ENCODE measurements at regions of chr12 and their contacts with region 1.

Region 1: GRCh38 chr12:95336390-95337067 is 118.9 kb downstream of the VEZT start:
- DNase-seq: peak in 3 of 4 experiments; percentile 10 to 57 (median 40)
- ATAC-seq: peak; percentile 87
- H3K4me3 ChIP-seq: no peak overlapping the region
- H3K27ac ChIP-seq: no peak overlapping the region
- H3K4me1 ChIP-seq: no peaks in the 10 kb centered on the region
- H3K27me3 ChIP-seq: peaks cover 5 to 10% of the 10 kb centered on the region in 2 experiments; a peak in 3 of 5 replicates
- CTCF ChIP-seq: peak; percentile 65 to 76 (median 73)
- EP300 ChIP-seq: no peak
- POLR2A ChIP-seq: no peak
- RAD21 ChIP-seq: peak; percentile 54 to 84

Region 2: GRCh38 chr12:94938583-94938982 is 397.9 kb before region 1 on chr12:
- CTCF ChIA-PET with region 1: no interaction called
- POLR2A ChIA-PET with region 1: no interaction called
- in situ Hi-C with region 1: no loop called
- intact Hi-C with region 1: loop called (anchors 10 kb)
- DNase-seq: no peak
- ATAC-seq: no peak
- H3K4me3 ChIP-seq: no peak overlapping the region
- H3K27ac ChIP-seq: no peak overlapping the region
- H3K4me1 ChIP-seq: peaks cover 2 to 4% of the 10 kb centered on the region in 2 experiments; a peak in 3 of 5 replicates
- H3K27me3 ChIP-seq: peaks cover 9 to 12% of the 10 kb centered on the region in 2 experiments; a peak in 3 of 5 replicates
- CTCF ChIP-seq: no peak
- EP300 ChIP-seq: no peak
- POLR2A ChIP-seq: no peak
- RAD21 ChIP-seq: no peak

Region 3: DNA sequence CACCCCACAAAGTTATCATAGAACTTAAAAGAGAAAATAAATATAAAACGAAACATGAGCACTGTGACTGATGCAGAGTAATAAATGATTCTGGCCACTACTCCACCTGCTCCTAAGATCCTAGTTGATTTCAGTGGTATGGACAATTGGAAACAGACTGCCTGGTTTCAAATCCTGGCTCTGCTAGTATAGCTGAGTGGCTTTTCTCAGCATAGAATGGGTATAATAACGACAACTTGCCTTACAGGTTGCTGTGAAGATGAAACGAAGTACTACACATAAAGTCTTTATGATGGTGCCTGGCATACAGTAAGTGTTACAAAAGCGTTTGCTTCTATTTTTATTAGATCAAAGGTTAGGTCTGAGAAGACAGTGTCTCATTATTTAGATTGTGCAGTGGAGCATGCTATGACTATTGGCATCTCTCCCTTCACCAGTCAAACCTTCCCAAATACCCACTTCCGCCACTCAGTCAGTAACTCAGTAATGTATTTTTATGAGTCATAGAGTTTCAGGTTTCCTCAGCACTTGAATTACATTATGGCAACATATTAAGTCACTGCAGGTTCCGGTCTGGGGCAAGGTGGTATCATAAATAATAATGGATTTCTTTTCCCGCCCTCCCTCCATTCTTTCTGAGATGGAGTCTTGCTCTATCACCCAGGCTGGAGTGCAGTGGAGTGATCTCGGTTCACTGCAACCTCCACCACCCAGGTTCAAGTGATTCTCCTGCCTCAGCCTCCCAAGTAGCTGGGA is 233.4 kb before region 1 on chr12:
- CTCF ChIA-PET with region 1: no interaction called
- POLR2A ChIA-PET with region 1: no interaction called
- in situ Hi-C with region 1: loop called (anchors 10 kb)
- intact Hi-C with region 1: no loop called
- DNase-seq: no peak
- ATAC-seq: no peak
- H3K4me3 ChIP-seq: no peak overlapping the region
- H3K27ac ChIP-seq: no peak overlapping the region
- H3K4me1 ChIP-seq: peaks cover 0 to 9% of the 10 kb centered on the region in 2 experiments; a peak in 3 of 5 replicates
- H3K27me3 ChIP-seq: no peaks in the 10 kb centered on the region
- CTCF ChIP-seq: no peak
- EP300 ChIP-seq: no peak
- POLR2A ChIP-seq: no peak
- RAD21 ChIP-seq: no peak

Region 4: GRCh38 chr12:95117178-95117599 is 219.3 kb before region 1 on chr12:
- CTCF ChIA-PET with region 1: interaction called, 3 read pairs
- POLR2A ChIA-PET with region 1: interaction called, 5 read pairs
- in situ Hi-C with region 1: no loop called
- intact Hi-C with region 1: loop called (anchors 1 kb)
- DNase-seq: peak; percentile 54 to 84 (median 60)
- ATAC-seq: peak; percentile 97
- H3K4me3 ChIP-seq: no peak overlapping the region
- H3K27ac ChIP-seq: no peak overlapping the region
- H3K4me1 ChIP-seq: no peaks in the 10 kb centered on the region; a peak in 1 of 5 replicates
- H3K27me3 ChIP-seq: no peaks in the 10 kb centered on the region
- CTCF ChIP-seq: peak; percentile 52 to 78 (median 66); a peak in 5 of 6 replicates
- EP300 ChIP-seq: no peak
- POLR2A ChIP-seq: no peak
- RAD21 ChIP-seq: peak; percentile 94 to 97

Region 5: GRCh38 chr12:95532851-95533250 is 196.3 kb after region 1 on chr12:
- CTCF ChIA-PET with region 1: no interaction called
- POLR2A ChIA-PET with region 1: no interaction called
- in situ Hi-C with region 1: no loop called
- intact Hi-C with region 1: loop called (anchors 2 kb)
- DNase-seq: no peak
- ATAC-seq: peak; percentile 38; the same call in 1 of the 3 replicates
- H3K4me3 ChIP-seq: no peak overlapping the region
- H3K27ac ChIP-seq: no peak overlapping the region
- H3K4me1 ChIP-seq: no peaks in the 10 kb centered on the region
- H3K27me3 ChIP-seq: no peaks in the 10 kb centered on the region
- CTCF ChIP-seq: no peak
- EP300 ChIP-seq: no peak
- POLR2A ChIP-seq: no peak
- RAD21 ChIP-seq: no peak

Region 6: DNA sequence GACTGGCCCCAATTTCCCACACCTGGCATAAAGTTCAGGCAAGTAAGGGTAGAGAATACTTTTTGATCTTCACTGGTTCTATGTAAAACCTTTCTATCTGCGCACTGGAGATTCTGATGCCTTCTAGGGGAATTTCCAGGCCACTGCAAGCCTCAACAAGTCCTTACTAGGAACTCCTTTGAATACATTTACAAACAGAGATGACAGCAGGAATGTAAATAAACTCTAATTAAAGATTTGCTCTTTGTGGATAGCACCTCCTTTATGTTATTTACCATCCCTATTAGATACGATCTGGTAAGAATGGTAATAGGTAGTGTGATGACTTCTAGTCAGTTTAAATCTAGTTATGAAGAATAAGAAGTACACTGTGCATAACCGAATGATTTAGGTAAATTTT is 384.8 kb after region 1 on chr12:
- CTCF ChIA-PET with region 1: no interaction called
- POLR2A ChIA-PET with region 1: no interaction called
- in situ Hi-C with region 1: no loop called
- intact Hi-C with region 1: no loop called
- DNase-seq: no peak
- ATAC-seq: no peak
- H3K4me3 ChIP-seq: no peak overlapping the region
- H3K27ac ChIP-seq: no peak overlapping the region
- H3K4me1 ChIP-seq: no peaks in the 10 kb centered on the region
- H3K27me3 ChIP-seq: no peaks in the 10 kb centered on the region; a peak in 2 of 5 replicates
- CTCF ChIP-seq: peak in 1 of 3 experiments; percentile 6; a peak in 1 of 6 replicates
- EP300 ChIP-seq: no peak
- POLR2A ChIP-seq: no peak
- RAD21 ChIP-seq: no peak